Psoas muscle (tissue), 8 donors: ENCODE measurements at regions of chr18 and their contacts with region 1.

Region 1: DNA sequence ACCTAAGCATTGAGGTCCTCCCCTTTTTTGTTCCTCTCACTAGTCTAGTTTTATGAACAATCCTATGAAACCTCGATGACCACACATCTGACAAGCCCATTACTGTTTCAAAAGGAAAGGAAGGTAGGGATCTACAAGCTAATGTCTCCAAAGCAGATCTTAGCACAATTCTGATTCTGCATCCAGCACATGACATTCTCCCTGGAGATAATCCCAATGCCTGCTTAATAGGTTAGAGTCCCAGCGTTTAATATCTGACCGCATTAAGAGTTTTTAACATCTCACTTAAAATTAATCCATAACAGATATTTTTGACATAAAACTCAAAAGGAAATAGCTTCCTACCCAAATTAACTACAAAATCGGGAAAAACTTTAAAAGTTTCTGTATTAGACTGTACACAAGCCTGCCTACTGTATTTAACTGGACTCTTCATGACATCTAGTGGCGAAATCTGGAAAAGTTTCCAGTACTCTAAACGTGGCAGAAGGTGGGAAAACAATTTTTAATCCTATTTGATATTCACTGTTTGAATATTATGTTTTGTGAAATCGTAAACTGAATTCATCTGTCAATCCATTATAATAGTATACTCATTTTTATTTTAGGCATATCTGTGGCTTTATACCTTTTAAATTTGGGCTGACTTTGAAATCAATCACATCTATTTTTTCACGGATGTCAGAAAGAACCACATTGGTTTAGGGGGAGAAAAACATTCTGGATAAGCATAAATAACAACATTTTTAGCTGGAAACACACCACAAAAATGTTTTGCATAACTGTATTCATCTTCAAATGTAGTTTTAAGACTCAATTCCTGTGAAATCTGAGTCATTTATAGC is 62.4 kb downstream of the TXNL1 start:
- DNase-seq: no peak
- ATAC-seq: peak in 3 of 4 donors; percentile 52 to 91 (median 65)
- H3K4me3 ChIP-seq: no peak overlapping the region
- H3K27ac ChIP-seq: no peak overlapping the region
- H3K4me1 ChIP-seq: peaks cover 15% of the 10 kb centered on the region
- H3K27me3 ChIP-seq: peaks cover 0 to 3% (median 0%) of the 10 kb centered on the region in 3 donors
- CTCF ChIP-seq: peak; percentile 72

Region 2: GRCh38 chr18:55096261-55096951 is 1479.6 kb before region 1 on chr18:
- intact Hi-C with region 1: loop called (anchors 5 to 10 kb)
- DNase-seq: peak in 1 of 2 donors; percentile 53
- ATAC-seq: peak in 3 of 4 donors; percentile 57 to 70 (median 59)
- H3K4me3 ChIP-seq: no peak overlapping the region
- H3K27ac ChIP-seq: no peak overlapping the region
- H3K4me1 ChIP-seq: no peaks in the 10 kb centered on the region
- H3K27me3 ChIP-seq: no peaks in the 10 kb centered on the region
- CTCF ChIP-seq: peak; percentile 34

Region 3: DNA sequence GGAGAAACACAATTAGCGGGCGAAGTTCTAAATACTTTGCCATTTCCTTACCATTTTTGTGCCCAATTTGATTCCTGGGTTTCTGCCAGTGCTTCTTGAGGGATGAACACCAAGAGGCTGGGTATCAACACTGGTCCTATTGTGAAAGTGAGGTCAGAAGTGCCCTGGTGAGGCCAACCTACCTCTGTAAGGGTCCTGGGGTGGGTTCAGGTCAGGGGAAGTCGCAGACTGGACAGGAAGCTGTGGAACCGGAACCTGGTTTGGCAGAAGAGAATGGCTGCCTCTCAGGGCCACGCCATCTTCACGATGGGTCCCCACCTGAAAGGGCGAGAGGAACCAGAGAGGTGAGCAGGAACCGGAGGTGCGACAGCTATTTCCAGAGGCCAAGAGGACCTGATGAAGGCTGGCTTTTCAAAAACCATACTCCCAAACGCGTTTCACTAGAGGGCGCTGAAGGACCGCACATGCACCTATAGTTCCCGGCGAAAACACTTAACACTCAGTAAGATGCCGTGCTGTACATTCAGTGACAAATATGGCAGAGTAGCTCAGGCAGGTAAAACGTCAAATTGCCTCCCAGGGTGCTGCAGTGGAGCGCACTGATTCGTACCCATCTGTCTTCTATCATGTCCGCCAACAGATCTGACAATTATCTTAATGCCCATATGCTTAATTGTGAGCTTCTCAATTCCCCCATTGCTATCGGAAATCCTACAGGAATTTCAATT is 1341.5 kb before region 1 on chr18:
- intact Hi-C with region 1: loop called in 1 of 2 experiments (anchors 10 kb)
- DNase-seq: peak; percentile 73 to 80
- ATAC-seq: peak; percentile 82 to 95 (median 90)
- H3K4me3 ChIP-seq: no peak overlapping the region
- H3K27ac ChIP-seq: peak overlapping the region; percentile 48
- H3K4me1 ChIP-seq: peaks cover 17% of the 10 kb centered on the region
- H3K27me3 ChIP-seq: no peaks in the 10 kb centered on the region
- CTCF ChIP-seq: peak; percentile 84

Region 4: GRCh38 chr18:55243857-55244256 is 1332.2 kb before region 1 on chr18:
- intact Hi-C with region 1: loop called (anchors 10 kb)
- DNase-seq: no peak
- ATAC-seq: peak; percentile 9 to 62 (median 36)
- H3K4me3 ChIP-seq: no peak overlapping the region
- H3K27ac ChIP-seq: peak overlapping the region; percentile 50
- H3K4me1 ChIP-seq: peaks cover 40% of the 10 kb centered on the region
- H3K27me3 ChIP-seq: no peaks in the 10 kb centered on the region
- CTCF ChIP-seq: no peak

Region 5: DNA sequence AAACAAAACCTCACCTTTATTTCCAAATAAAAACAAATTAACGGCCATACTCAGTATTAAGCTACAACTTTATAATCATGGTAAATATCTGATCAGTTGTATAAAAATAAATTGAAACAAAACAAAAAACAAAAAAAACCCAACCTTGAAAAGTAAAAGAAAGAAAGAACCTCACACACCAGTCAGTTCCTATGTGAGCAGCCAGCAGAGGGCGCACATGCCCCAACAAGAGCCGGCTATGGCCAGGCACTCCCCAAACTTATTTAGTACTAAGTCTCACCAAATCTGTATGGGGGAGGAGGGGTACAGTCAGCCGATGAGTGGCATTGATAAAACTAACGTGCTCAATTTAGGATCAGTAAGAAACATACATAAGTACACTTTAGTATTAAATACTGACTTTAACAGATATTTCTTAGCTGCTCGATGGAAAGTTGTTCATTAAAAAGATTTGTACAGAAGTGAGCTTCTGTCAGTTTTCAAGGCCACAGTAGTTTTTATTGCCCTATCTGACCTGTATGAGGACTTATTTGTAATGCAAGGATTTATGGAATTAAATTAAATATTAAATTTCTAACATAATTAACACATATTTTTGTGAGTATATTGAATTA is 1160.7 kb before region 1 on chr18:
- intact Hi-C with region 1: loop called in 1 of 2 experiments (anchors 10 kb)
- DNase-seq: peak; percentile 88 to 92
- ATAC-seq: peak; percentile 86 to 92 (median 90)
- H3K4me3 ChIP-seq: peak overlapping the region; percentile 20
- H3K27ac ChIP-seq: peak overlapping the region; percentile 32
- H3K4me1 ChIP-seq: peaks cover 63% of the 10 kb centered on the region
- H3K27me3 ChIP-seq: no peaks in the 10 kb centered on the region
- CTCF ChIP-seq: peak; percentile 94

Region 6: DNA sequence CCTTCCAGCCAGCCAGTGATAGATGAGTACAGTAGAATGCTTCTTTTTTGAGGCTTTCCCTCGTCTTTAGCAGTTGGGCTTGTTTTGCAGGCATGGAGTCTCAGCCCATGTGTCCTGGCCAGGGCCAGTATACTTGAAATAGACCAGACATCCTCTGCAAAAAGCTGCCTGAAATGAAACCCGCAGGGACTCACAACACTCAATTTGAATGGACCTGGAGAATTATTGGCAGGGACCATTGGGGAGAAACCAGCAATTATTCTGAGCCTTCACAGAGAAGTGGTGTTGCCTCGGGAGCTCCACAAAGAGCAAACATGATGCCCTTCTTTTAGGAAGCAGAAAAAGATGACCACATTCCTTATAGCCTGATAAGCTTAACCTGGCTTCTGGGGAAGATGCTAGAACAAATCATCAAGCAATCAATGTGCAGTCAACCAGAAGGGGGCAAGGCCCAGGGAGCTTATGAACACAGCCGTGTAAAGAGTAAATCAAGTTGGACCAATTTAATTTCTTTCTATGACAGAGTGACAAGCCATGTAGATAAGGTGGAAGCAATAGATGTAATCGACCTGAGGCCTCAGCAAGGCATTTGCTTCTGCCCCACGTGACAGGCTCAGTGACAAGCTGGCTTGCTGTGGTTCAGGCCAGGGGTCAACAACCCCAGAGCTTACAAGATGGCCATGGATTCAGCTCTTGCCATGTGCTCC is 613.0 kb after region 1 on chr18:
- intact Hi-C with region 1: no loop called
- DNase-seq: no peak
- ATAC-seq: no peak
- H3K4me3 ChIP-seq: no peak overlapping the region
- H3K27ac ChIP-seq: no peak overlapping the region
- H3K4me1 ChIP-seq: no peaks in the 10 kb centered on the region
- H3K27me3 ChIP-seq: no peaks in the 10 kb centered on the region
- CTCF ChIP-seq: no peak